Posterior vena cava (tissue), 2 donors: ENCODE measurements at regions of chr1 and their contacts with region 1.

Region 1: GRCh38 chr1:200550367-200550766 is 70.2 kb downstream of the KIF14 start:
- DNase-seq: no peak

Region 2: DNA sequence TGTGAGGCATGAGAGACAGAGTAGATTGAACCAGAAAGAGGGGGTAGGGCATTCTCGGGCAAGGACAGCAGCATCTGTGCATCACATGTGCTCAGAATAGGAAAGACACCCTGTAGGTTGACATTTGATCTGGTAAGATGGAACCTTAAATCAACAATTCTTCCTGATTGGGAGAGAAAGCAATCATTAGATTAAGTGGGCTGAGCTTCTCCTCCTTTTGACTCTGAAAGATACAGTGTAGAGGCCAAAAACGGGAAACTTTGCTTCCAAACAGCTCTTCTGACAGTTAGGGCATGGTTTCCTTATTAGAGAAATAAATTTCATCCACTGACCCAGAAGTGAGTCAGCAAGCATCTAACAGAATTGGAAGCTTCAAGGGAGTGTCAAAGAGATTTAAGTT is 60.5 kb after region 1 on chr1:
- intact Hi-C with region 1: loop called in 1 of 2 experiments (anchors 2 kb)
- DNase-seq: no peak